HEK293 (cell line): ENCODE measurements at regions of chr5 and their contacts with region 1.

Region 1: GRCh38 chr5:95781101-95781583 is 41.4 kb downstream of the GLRX start:
- H3K4me3 ChIP-seq: no peak overlapping the region
- H3K27ac ChIP-seq: no peak overlapping the region
- H3K4me1 ChIP-seq: no peaks in the 10 kb centered on the region
- CTCF ChIP-seq: peak; percentile 65

Region 2: DNA sequence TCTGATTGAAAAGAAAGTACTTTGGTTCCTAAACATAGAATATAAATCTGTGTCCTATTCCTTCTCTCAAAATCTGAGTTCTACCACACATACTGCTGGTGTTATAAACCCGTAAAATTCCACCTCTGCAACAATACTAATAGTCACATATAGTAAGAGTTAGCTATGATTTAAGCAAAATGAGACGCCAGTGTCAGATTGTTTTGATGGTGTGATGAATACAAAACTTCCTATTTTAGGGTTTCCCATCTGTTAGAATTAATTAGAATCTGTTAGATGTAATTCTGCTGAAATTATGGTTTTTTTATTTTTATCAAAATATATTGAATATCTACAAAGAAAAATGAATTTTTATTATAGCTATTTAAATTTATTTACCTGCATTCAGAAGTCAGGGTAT is 199.6 kb before region 1 on chr5:
- CTCF ChIA-PET with region 1: no interaction called
- POLR2A ChIA-PET with region 1: no interaction called
- H3K4me3 ChIP-seq: no peak overlapping the region
- H3K27ac ChIP-seq: no peak overlapping the region
- H3K4me1 ChIP-seq: no peaks in the 10 kb centered on the region
- CTCF ChIP-seq: no peak

Region 3: GRCh38 chr5:95641741-95642220 is 139.4 kb before region 1 on chr5:
- CTCF ChIA-PET with region 1: interaction called, 17 read pairs
- POLR2A ChIA-PET with region 1: interaction called, 5 read pairs
- H3K4me3 ChIP-seq: no peak overlapping the region
- H3K27ac ChIP-seq: no peak overlapping the region
- H3K4me1 ChIP-seq: no peaks in the 10 kb centered on the region
- CTCF ChIP-seq: no peak

Region 4: DNA sequence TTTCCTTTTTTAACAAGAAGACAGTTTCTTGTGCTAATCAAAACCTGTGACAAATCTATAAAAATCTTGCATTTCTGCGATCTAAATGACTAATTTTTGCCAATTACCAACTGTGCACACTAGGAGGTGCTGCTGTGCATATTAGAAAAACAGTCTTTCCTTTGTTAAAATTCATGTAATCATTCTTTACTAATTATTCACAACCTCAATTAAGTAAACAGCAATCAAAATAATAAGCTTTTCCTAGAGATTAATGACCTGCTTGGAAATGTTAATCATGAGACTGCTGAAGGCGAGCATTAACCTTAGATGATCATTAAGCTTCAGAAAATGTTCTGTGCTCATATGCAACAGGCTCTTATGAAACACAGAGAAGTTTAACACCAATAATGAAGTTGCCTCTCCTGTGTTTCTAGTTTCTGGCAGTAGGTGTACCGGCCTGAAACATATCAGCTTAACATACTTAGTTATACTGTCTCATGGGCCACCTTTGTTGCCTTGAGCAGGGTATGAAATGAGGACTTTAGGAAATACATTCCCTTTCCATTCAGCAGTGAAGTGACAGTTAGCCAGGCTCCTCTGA is 116.8 kb before region 1 on chr5:
- CTCF ChIA-PET with region 1: interaction called, 25 read pairs
- POLR2A ChIA-PET with region 1: no interaction called
- H3K4me3 ChIP-seq: no peak overlapping the region
- H3K27ac ChIP-seq: no peak overlapping the region
- H3K4me1 ChIP-seq: no peaks in the 10 kb centered on the region
- CTCF ChIP-seq: no peak; the same call in 1 of the 2 replicates

Region 5: GRCh38 chr5:95770830-95771708 is 10.1 kb before region 1 on chr5:
- CTCF ChIA-PET with region 1: interaction called, 33 read pairs
- POLR2A ChIA-PET with region 1: no interaction called
- H3K4me3 ChIP-seq: no peak overlapping the region
- H3K27ac ChIP-seq: no peak overlapping the region
- H3K4me1 ChIP-seq: peaks cover 6% of the 10 kb centered on the region; the same call in 1 of the 2 replicates
- CTCF ChIP-seq: no peak

Region 6: GRCh38 chr5:95835682-95836385 is 54.7 kb after region 1 on chr5:
- CTCF ChIA-PET with region 1: interaction called, 13 read pairs
- POLR2A ChIA-PET with region 1: interaction called, 4 read pairs
- H3K4me3 ChIP-seq: no peak overlapping the region
- H3K27ac ChIP-seq: no peak overlapping the region
- H3K4me1 ChIP-seq: peaks cover 7% of the 10 kb centered on the region
- CTCF ChIP-seq: no peak

Region 7: GRCh38 chr5:96017951-96018350 is 236.8 kb after region 1 on chr5:
- CTCF ChIA-PET with region 1: no interaction called
- POLR2A ChIA-PET with region 1: no interaction called
- H3K4me3 ChIP-seq: no peak overlapping the region
- H3K27ac ChIP-seq: no peak overlapping the region
- H3K4me1 ChIP-seq: peaks cover 4% of the 10 kb centered on the region
- CTCF ChIP-seq: no peak